Activated CD4-positive, alpha-beta T cell treated with anti-CD3 and anti-CD28 coated beads, Interleukin-2, amount 10 ng/mL, durations not matched to agents 7 days and 5 days (primary cell): ENCODE measurements at regions of chr16 and their contacts with region 1.

Region 1: GRCh38 chr16:75326333-75326732 is 74.9 kb upstream of the BCAR1 start:
- DNase-seq: peak; percentile 28
- H3K4me3 Mint-ChIP-seq: no peak overlapping the region
- H3K27ac Mint-ChIP-seq: no peak overlapping the region
- H3K4me1 Mint-ChIP-seq: peaks cover 22% of the 10 kb centered on the region
- H3K27me3 Mint-ChIP-seq: peaks cover 6% of the 10 kb centered on the region

Region 2: DNA sequence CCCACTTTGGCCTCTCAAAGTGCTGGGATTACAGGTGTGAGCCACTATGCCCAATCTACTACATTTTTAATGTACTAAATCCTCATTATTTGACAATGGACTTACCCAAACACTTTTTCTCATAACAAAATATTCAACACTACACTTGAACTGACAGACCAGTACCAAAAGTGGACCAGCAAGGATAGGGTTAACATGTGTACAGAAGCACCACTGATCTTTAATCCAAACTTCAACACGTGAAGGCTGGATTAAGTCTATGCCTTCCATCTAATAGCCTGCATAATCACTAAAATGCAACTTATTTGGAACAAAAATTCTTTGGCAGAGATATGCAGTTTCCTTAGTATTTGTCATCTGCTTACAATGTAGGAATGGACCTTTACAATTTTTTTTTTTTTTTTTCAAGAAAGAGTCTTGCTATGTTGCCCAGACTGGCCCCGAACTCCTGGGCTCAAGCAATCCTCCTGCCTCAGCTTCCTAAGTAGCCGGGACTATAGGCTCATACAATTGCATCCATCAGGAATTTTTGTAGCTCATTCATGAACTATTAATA is 14.9 kb before region 1 on chr16:
- CTCF ChIA-PET with region 1: interaction called, 10 read pairs
- POLR2A ChIA-PET with region 1: no interaction called
- DNase-seq: no peak
- H3K4me3 Mint-ChIP-seq: no peak overlapping the region
- H3K27ac Mint-ChIP-seq: no peak overlapping the region
- H3K4me1 Mint-ChIP-seq: peaks cover 5% of the 10 kb centered on the region
- H3K27me3 Mint-ChIP-seq: peaks cover 6% of the 10 kb centered on the region